CD8-positive, alpha-beta T cell (primary cell): ENCODE measurements at regions of chr4 and their contacts with region 1.

Region 1: DNA sequence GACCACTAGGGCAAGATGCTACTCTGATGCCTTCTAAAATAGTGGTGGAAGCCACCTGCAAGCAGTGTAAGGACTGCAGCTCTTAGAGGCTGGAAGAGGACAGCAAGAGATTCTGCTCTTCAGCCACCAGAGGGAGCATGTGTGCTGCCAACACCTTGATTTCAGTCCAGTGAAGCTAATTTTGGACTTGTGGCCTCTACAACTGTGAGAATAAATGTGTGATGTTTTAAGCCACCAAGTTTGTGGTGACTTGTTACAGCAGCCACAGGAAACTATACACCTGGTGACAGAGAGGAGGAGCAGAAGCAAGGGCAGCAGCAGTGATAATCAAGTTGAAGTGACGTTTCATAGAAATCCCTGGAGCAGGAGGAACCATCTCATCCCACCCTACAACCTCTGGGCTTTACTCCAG is 55.9 kb downstream of the FGFBP1 start:
- DNase-seq: peak in 8 of 9 experiments; percentile 16 to 81 (median 49)
- ATAC-seq: peak; percentile 63
- H3K4me3 ChIP-seq: no peak overlapping the region
- H3K4me3 Mint-ChIP-seq: no peak overlapping the region
- H3K27ac ChIP-seq: no peak overlapping the region
- H3K27ac Mint-ChIP-seq: no peak overlapping the region
- H3K4me1 ChIP-seq: no peaks in the 10 kb centered on the region
- H3K4me1 Mint-ChIP-seq: no peaks in the 10 kb centered on the region
- H3K27me3 ChIP-seq: no peaks in the 10 kb centered on the region
- H3K27me3 Mint-ChIP-seq: peaks cover 4% of the 10 kb centered on the region
- CTCF ChIP-seq: peak; percentile 80

Region 2: GRCh38 chr4:15729910-15730533 is 152.7 kb before region 1 on chr4:
- CTCF ChIA-PET with region 1: interaction called, 5 read pairs
- POLR2A ChIA-PET with region 1: no interaction called
- intact Hi-C with region 1: loop called (anchors 1 to 2 kb)
- DNase-seq: peak in 6 of 9 experiments; percentile 10 to 71 (median 28)
- ATAC-seq: peak; percentile 70
- H3K4me3 ChIP-seq: no peak overlapping the region
- H3K4me3 Mint-ChIP-seq: no peak overlapping the region
- H3K27ac ChIP-seq: no peak overlapping the region
- H3K27ac Mint-ChIP-seq: no peak overlapping the region
- H3K4me1 ChIP-seq: no peaks in the 10 kb centered on the region
- H3K4me1 Mint-ChIP-seq: peaks cover 20% of the 10 kb centered on the region
- H3K27me3 ChIP-seq: no peaks in the 10 kb centered on the region
- H3K27me3 Mint-ChIP-seq: peaks cover 2% of the 10 kb centered on the region
- CTCF ChIP-seq: peak; percentile 100

Region 3: GRCh38 chr4:15870079-15870478 is 12.6 kb before region 1 on chr4:
- CTCF ChIA-PET with region 1: interaction called, 18 read pairs
- POLR2A ChIA-PET with region 1: no interaction called
- intact Hi-C with region 1: no loop called
- DNase-seq: no peak
- ATAC-seq: no peak
- H3K4me3 ChIP-seq: no peak overlapping the region
- H3K4me3 Mint-ChIP-seq: no peak overlapping the region
- H3K27ac ChIP-seq: no peak overlapping the region
- H3K27ac Mint-ChIP-seq: no peak overlapping the region
- H3K4me1 ChIP-seq: no peaks in the 10 kb centered on the region
- H3K4me1 Mint-ChIP-seq: no peaks in the 10 kb centered on the region
- H3K27me3 ChIP-seq: peaks cover 0 to 2% of the 10 kb centered on the region in 2 experiments
- H3K27me3 Mint-ChIP-seq: peaks cover 3% of the 10 kb centered on the region
- CTCF ChIP-seq: no peak

Region 4: GRCh38 chr4:15956179-15956850 is 73.6 kb after region 1 on chr4:
- CTCF ChIA-PET with region 1: interaction called, 23 read pairs
- POLR2A ChIA-PET with region 1: no interaction called
- intact Hi-C with region 1: loop called (anchors 1 kb)
- DNase-seq: peak; percentile 55 to 87 (median 79)
- ATAC-seq: peak; percentile 98
- H3K4me3 ChIP-seq: no peak overlapping the region
- H3K4me3 Mint-ChIP-seq: no peak overlapping the region
- H3K27ac ChIP-seq: no peak overlapping the region
- H3K27ac Mint-ChIP-seq: no peak overlapping the region
- H3K4me1 ChIP-seq: no peaks in the 10 kb centered on the region
- H3K4me1 Mint-ChIP-seq: peaks cover 10% of the 10 kb centered on the region
- H3K27me3 ChIP-seq: no peaks in the 10 kb centered on the region
- H3K27me3 Mint-ChIP-seq: no peaks in the 10 kb centered on the region
- CTCF ChIP-seq: peak; percentile 73

Region 5: DNA sequence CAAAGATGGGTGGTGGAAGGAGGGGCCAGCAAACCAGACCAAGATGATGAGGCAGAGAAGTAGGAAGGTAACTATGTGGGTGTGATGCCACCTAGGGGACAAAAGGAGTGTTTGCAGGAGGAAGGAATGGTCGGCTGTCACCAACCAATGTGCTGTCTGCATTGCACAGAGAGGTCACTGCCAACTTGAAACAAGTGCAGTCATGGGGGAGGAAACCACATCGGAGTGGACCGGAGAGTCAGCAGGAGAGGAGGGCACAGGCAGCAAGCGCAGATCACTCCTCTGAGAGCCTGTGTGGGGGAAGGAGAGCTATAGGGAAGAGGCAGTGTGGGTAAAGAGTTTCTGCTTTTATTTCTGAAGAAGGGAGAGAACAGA is 118.8 kb after region 1 on chr4:
- CTCF ChIA-PET with region 1: interaction called, 112 read pairs
- POLR2A ChIA-PET with region 1: interaction called, 3 read pairs
- intact Hi-C with region 1: loop called in 1 of 2 experiments (anchors 1 kb)
- DNase-seq: peak in 8 of 9 experiments; percentile 13 to 81 (median 47)
- ATAC-seq: peak; percentile 96
- H3K4me3 ChIP-seq: no peak overlapping the region
- H3K4me3 Mint-ChIP-seq: no peak overlapping the region
- H3K27ac ChIP-seq: no peak overlapping the region
- H3K27ac Mint-ChIP-seq: no peak overlapping the region
- H3K4me1 ChIP-seq: no peaks in the 10 kb centered on the region
- H3K4me1 Mint-ChIP-seq: no peaks in the 10 kb centered on the region
- H3K27me3 ChIP-seq: no peaks in the 10 kb centered on the region
- H3K27me3 Mint-ChIP-seq: peaks cover 3% of the 10 kb centered on the region
- CTCF ChIP-seq: peak; percentile 68

Region 6: GRCh38 chr4:16264798-16265197 is 382.1 kb after region 1 on chr4:
- CTCF ChIA-PET with region 1: interaction called, 4 read pairs
- POLR2A ChIA-PET with region 1: no interaction called
- intact Hi-C with region 1: loop called (anchors 2 to 5 kb)
- DNase-seq: peak in 2 of 9 experiments; percentile 50 to 63
- ATAC-seq: no peak
- H3K4me3 ChIP-seq: no peak overlapping the region
- H3K4me3 Mint-ChIP-seq: no peak overlapping the region
- H3K27ac ChIP-seq: no peak overlapping the region
- H3K27ac Mint-ChIP-seq: no peak overlapping the region
- H3K4me1 ChIP-seq: no peaks in the 10 kb centered on the region
- H3K4me1 Mint-ChIP-seq: peaks cover 6% of the 10 kb centered on the region
- H3K27me3 ChIP-seq: no peaks in the 10 kb centered on the region
- H3K27me3 Mint-ChIP-seq: no peaks in the 10 kb centered on the region
- CTCF ChIP-seq: peak; percentile 69